Activated CD8-positive, alpha-beta T cell treated with anti-CD3 and anti-CD28 coated beads for 36 hours (primary cell): ENCODE measurements at regions of chr7 and their contacts with region 1.

Region 1: GRCh38 chr7:130486114-130486958 is 5.5 kb upstream of the MEST start:
- DNase-seq: peak; percentile 70
- ATAC-seq: peak; percentile 81
- H3K4me3 Mint-ChIP-seq: peak overlapping the region; percentile 71
- H3K27ac Mint-ChIP-seq: peak overlapping the region; percentile 68
- H3K4me1 Mint-ChIP-seq: peaks cover 25% of the 10 kb centered on the region
- H3K27me3 Mint-ChIP-seq: peaks cover 13% of the 10 kb centered on the region
- CTCF ChIP-seq: peak; percentile 96

Region 2: DNA sequence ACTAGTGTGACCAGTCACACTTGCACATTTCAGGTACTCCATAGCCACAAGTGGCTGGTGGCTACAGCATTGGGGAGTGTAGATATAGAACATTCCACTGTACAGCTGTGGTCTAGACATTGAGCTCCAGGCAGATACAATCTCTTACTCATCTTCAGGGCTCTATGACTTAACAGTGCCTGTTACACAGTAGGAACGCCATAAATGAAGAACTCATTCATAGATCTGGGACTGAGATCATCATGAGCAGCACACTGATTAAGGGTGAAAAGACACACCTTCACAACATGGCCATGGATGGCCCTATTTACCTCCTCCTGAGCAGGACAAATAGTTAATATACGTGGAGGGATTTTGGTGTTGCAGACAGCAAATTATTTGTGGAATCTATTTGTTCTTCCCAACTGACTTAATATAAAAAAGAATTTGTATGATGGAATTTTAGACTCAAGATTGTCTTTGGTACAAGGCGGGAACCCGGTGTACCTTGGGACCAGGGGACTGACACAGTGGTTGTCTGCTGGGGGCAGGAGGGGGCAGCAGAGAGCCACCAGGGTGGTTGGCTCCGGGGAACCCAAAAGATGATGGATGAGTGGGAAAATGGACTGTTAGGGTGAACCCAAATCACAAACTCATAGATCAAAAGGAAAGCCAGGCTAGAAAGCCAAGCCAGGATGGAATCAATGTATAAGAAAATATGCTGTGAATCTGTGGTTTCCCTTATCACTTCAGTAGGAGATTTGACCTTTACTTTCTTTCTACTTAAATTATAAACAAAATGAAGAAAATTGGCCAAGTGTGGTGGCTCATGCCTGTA is 243.9 kb before region 1 on chr7:
- CTCF ChIA-PET with region 1: interaction called, 5 read pairs
- POLR2A ChIA-PET with region 1: no interaction called
- intact Hi-C with region 1: loop called (anchors 10 kb)
- DNase-seq: peak; percentile 72
- ATAC-seq: peak; percentile 84
- H3K4me3 Mint-ChIP-seq: no peak overlapping the region
- H3K27ac Mint-ChIP-seq: no peak overlapping the region
- H3K4me1 Mint-ChIP-seq: peaks cover 8% of the 10 kb centered on the region
- H3K27me3 Mint-ChIP-seq: no peaks in the 10 kb centered on the region
- CTCF ChIP-seq: peak; percentile 90

Region 3: GRCh38 chr7:130409067-130409713 is 77.1 kb before region 1 on chr7:
- CTCF ChIA-PET with region 1: no interaction called
- POLR2A ChIA-PET with region 1: no interaction called
- intact Hi-C with region 1: no loop called
- DNase-seq: no peak
- ATAC-seq: no peak
- H3K4me3 Mint-ChIP-seq: no peak overlapping the region
- H3K27ac Mint-ChIP-seq: no peak overlapping the region
- H3K4me1 Mint-ChIP-seq: peaks cover 38% of the 10 kb centered on the region
- H3K27me3 Mint-ChIP-seq: no peaks in the 10 kb centered on the region
- CTCF ChIP-seq: no peak

Region 4: GRCh38 chr7:130721486-130722280 is 235.3 kb after region 1 on chr7:
- CTCF ChIA-PET with region 1: no interaction called
- POLR2A ChIA-PET with region 1: no interaction called
- intact Hi-C with region 1: loop called (anchors 10 kb)
- DNase-seq: peak; percentile 55
- ATAC-seq: peak; percentile 39
- H3K4me3 Mint-ChIP-seq: no peak overlapping the region
- H3K27ac Mint-ChIP-seq: no peak overlapping the region
- H3K4me1 Mint-ChIP-seq: no peaks in the 10 kb centered on the region
- H3K27me3 Mint-ChIP-seq: peaks cover 19% of the 10 kb centered on the region
- CTCF ChIP-seq: peak; percentile 22